ENCODE measurements at regions of chr13 and their contacts with region 1.

Region 1: DNA sequence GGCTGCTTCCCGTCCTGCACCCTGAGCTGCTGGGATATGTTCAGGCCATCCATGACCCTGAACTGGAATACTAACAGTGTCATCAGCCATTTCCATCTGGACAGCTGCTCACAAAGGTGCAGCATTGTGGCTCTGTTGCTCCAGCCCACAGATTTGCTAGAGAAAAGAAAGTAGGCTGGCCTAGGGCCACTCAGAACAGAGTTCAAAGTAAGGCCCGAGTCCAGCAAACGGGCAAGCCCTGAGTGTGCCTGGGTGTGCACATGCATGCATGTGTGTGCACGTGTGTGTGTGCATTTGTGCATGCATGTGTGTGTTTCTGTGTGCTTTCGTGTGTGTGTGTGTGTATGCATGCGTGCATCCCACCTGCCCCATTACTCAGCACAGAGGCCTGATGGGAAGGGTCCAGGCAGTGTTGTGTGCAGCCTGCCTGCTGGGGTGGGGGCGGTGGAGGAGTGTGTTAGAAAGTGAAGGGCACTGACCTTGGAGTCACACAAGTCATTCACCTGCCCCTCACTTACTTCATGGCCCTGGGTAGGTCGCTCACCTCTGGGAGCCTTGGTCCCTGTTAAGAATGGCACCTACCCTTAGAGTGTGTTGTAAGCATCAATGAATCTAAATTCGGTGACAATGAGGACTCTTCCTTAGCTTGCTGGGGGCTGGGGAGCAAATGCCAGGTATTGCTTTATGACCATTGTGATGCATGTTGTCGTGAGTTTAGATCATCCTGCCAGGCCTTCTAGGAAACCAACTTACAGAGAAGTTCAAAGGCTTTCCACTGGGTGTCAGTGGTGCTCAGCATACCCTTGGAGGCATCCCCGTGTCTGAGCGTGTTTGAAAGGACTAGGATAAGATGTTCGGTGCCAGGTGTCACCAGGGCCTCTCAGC is 53.2 kb downstream of the GPR12 start:
- DNase-seq: peak; percentile 6 to 29 (median 14)
- ATAC-seq: peak; percentile 76; the same call in 2 of the 3 replicates
- H3K4me3 ChIP-seq: no peak overlapping the region
- H3K27ac ChIP-seq: no peak overlapping the region
- H3K4me1 ChIP-seq: no peaks in the 10 kb centered on the region
- H3K27me3 ChIP-seq: 0 out of 5 replicates have a peak, but pooled peaks cover 0 to 7% of the 10 kb centered on the region in 2 experiments
- CTCF ChIP-seq: peak; percentile 36 to 52 (median 45); a peak in 4 of 6 replicates
- EP300 ChIP-seq: no peak
- POLR2A ChIP-seq: no peak
- RAD21 ChIP-seq: peak in 1 of 2 experiments; percentile 45; a peak in 1 of 4 replicates

Region 2: GRCh38 chr13:26508885-26509284 is 198.5 kb before region 1 on chr13:
- CTCF ChIA-PET with region 1: no interaction called
- POLR2A ChIA-PET with region 1: no interaction called
- in situ Hi-C with region 1: no loop called
- intact Hi-C with region 1: no loop called
- DNase-seq: no peak
- ATAC-seq: no peak
- H3K4me3 ChIP-seq: no peak overlapping the region
- H3K27ac ChIP-seq: no peak overlapping the region
- H3K4me1 ChIP-seq: no peaks in the 10 kb centered on the region
- H3K27me3 ChIP-seq: peaks cover 0 to 1% of the 10 kb centered on the region in 2 experiments; a peak in 2 of 5 replicates
- CTCF ChIP-seq: no peak
- EP300 ChIP-seq: no peak
- POLR2A ChIP-seq: no peak
- RAD21 ChIP-seq: no peak

Region 3: DNA sequence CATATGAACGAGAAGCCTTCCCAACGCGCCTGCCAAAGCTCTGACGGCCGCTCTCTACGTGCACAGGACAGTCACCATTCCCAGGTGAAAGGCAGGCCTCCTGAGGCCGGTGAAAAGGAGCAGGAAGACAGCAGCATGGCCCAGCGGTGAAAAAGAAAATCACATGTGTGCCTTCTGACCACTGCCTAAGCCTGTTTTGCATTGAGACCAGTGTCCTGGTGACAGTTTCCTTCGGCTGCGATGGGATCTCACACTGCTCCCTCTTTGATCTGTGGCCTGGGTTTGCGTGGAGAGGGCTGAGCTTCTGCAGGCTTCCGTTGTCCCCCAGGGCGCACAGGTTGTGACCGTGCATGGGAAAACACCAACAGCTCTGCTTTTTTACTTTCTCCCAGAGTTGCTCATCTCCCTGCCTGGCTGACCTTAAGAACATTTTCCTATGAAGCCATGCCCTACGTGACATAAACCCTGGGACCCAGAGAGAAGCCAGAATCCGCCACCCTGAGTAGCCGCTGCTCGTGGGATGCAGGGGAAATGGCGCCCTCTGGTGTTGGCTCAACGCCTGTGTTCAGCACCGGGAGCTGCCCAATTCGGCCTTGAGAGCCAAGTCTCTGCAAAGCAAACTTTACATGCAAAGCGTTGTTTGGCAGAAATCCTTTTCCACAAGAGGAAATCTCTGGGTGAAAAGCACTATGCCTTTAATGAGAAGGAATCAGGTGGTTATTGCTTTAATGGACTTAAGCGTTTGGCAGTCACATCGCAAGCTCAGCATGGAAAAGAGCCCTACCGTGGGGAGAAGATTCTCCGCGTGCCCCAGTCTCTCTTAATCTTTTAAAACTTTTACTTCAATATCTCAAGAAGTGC is 165.4 kb after region 1 on chr13:
- CTCF ChIA-PET with region 1: no interaction called
- POLR2A ChIA-PET with region 1: no interaction called
- in situ Hi-C with region 1: no loop called
- intact Hi-C with region 1: loop called (anchors 1 kb)
- DNase-seq: peak; percentile 42 to 61 (median 56)
- ATAC-seq: peak; percentile 90
- H3K4me3 ChIP-seq: no peak overlapping the region
- H3K27ac ChIP-seq: no peak overlapping the region
- H3K4me1 ChIP-seq: no peaks in the 10 kb centered on the region
- H3K27me3 ChIP-seq: no peaks in the 10 kb centered on the region
- CTCF ChIP-seq: peak; percentile 70 to 78 (median 76)
- EP300 ChIP-seq: no peak
- POLR2A ChIP-seq: no peak
- RAD21 ChIP-seq: peak; percentile 21 to 66; a peak in 3 of 4 replicates

Region 4: DNA sequence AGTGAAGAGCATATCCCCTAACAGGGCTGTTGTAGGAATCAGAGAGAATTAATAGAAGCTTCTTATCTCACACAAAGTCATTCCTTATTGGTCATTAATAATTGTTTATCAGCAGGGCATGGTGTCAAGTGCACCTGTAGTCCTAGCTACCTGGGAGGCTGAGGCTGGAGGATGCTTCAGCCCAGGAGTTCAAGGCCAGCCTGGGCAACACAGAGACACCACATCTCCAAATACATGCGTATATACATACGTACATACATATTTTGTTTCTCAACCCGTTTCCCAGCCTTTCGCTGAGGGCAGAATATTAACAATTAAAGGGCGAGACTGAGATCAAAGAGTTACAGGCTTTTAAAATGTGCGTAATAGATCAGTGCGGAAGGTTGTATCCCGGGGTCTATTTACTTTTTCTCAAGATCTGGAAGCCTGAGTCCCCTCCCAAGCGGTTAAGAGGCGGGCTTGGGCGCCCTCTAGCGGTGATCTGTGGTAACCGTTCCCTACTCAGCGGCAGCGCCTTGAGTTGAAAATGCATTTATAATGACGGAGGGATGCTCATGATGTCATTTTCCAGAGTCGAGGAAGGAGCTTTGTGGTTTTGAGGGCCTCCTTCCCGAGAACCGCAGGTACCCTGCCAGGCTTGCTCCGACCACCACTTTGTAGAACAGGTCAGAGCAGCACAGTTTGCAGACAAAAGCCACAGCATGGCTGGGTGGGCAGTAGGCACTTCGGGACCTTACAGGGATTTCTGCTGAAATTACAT is 222.8 kb after region 1 on chr13:
- CTCF ChIA-PET with region 1: interaction called, 3 read pairs
- POLR2A ChIA-PET with region 1: no interaction called
- in situ Hi-C with region 1: loop called (anchors 10 kb)
- intact Hi-C with region 1: loop called (anchors 1 kb)
- DNase-seq: peak; percentile 71 to 77 (median 72)
- ATAC-seq: peak; percentile 95
- H3K4me3 ChIP-seq: no peak overlapping the region
- H3K27ac ChIP-seq: no peak overlapping the region
- H3K4me1 ChIP-seq: no peaks in the 10 kb centered on the region; a peak in 1 of 5 replicates
- H3K27me3 ChIP-seq: peaks cover 0 to 15% of the 10 kb centered on the region in 2 experiments
- CTCF ChIP-seq: peak; percentile 67 to 84 (median 81)
- EP300 ChIP-seq: no peak
- POLR2A ChIP-seq: no peak
- RAD21 ChIP-seq: peak; percentile 31 to 64

Measured in K562 (cell line).